PC-3 (cell line): ENCODE measurements at regions of chrX and their contacts with region 1.

Region 1: GRCh38 chrX:55717521-55718497 is at the start of gene RRAGB:
- DNase-seq: peak; percentile 95
- ATAC-seq: peak; percentile 99
- H3K4me3 ChIP-seq: peak within 1 kb of the TSS; percentile 92
- H3K27ac ChIP-seq: peak within 1 kb of the TSS; percentile 72
- H3K4me1 ChIP-seq: peaks cover 8% of the 10 kb centered on the region
- H3K27me3 ChIP-seq: no peaks in the 10 kb centered on the region
- CTCF ChIP-seq: peak; percentile 79
- total RNA-seq, gene RRAGB: 9.5 and 14.3 TPM in 2 replicates

Region 2: DNA sequence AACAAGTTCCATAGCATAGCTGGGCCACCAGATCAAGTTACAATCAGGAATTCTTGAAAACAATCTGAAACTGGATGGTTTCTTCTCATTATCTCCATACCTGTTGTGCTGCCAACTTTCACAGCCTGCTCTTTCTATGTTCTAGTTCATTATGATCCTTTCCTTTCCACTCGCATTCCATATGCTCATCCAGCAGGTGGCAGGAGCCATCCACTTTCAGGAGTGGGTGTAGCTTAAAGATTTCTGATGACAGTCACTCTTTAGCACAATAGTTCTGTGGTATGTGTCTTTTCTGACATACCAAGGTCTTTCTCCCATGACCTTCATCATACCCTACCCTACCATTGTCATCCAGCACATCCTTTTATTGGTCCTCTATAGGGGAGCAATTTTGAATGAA is 582.6 kb before region 1 on chrX:
- CTCF ChIA-PET with region 1: interaction called, 3 read pairs
- POLR2A ChIA-PET with region 1: no interaction called
- intact Hi-C with region 1: loop called (anchors 1 kb)
- DNase-seq: peak; percentile 55
- ATAC-seq: peak; percentile 67
- H3K4me3 ChIP-seq: no peak overlapping the region
- H3K27ac ChIP-seq: no peak overlapping the region
- H3K4me1 ChIP-seq: no peaks in the 10 kb centered on the region
- H3K27me3 ChIP-seq: no peaks in the 10 kb centered on the region; the same call in 1 of the 2 replicates
- CTCF ChIP-seq: peak; percentile 73

Region 3: GRCh38 chrX:55488006-55488592 is 229.7 kb before region 1 on chrX:
- CTCF ChIA-PET with region 1: no interaction called
- POLR2A ChIA-PET with region 1: no interaction called
- intact Hi-C with region 1: no loop called
- DNase-seq: no peak
- ATAC-seq: no peak
- H3K4me3 ChIP-seq: peak overlapping the region; percentile 93
- H3K27ac ChIP-seq: no peak overlapping the region
- H3K4me1 ChIP-seq: peaks cover 5% of the 10 kb centered on the region; the same call in 1 of the 2 replicates
- H3K27me3 ChIP-seq: no peaks in the 10 kb centered on the region
- CTCF ChIP-seq: no peak

Region 4: GRCh38 chrX:55767100-55767499 is 49.3 kb after region 1 on chrX:
- CTCF ChIA-PET with region 1: no interaction called
- POLR2A ChIA-PET with region 1: no interaction called
- intact Hi-C with region 1: loop called (anchors 10 kb)
- DNase-seq: peak; percentile 59
- ATAC-seq: peak; percentile 93
- H3K4me3 ChIP-seq: no peak overlapping the region
- H3K27ac ChIP-seq: no peak overlapping the region
- H3K4me1 ChIP-seq: peaks cover 13% of the 10 kb centered on the region
- H3K27me3 ChIP-seq: no peaks in the 10 kb centered on the region
- CTCF ChIP-seq: no peak

Region 5: DNA sequence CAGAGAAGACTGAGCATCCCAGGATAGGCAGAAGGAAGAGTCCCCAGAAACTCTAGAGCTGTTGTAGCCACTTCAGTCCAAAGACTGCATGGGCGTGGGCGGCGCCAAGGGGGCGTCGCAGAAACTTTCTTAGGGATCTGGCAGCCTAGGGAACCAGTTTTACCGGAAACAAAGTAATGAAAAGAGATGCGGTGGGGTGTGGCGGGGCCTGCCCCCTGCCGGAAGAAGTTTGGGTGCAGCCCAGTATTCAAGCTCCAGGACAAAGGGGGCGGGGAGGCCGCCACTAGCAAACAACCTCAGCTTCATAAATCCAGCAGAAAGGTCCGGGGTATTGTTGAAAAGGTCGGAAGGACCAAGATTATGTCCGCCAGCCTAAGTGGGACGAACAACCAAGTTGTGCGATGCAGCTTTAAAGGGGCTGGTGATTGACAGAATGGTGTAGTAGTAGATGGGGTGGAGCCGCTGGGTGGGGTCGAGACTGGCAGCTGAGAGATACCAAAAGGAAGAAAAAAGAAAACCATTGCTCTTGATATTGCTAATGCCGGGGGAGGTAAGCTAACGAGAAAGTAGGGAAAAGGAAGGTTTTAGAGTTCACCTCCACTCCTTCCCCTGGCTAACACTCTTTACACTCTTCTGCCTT is 190.3 kb after region 1 on chrX:
- CTCF ChIA-PET with region 1: no interaction called
- POLR2A ChIA-PET with region 1: no interaction called
- intact Hi-C with region 1: loop called (anchors 1 kb)
- DNase-seq: peak; percentile 77
- ATAC-seq: peak; percentile 66
- H3K4me3 ChIP-seq: peak overlapping the region; percentile 86
- H3K27ac ChIP-seq: peak overlapping the region; percentile 27
- H3K4me1 ChIP-seq: peaks cover 7% of the 10 kb centered on the region
- H3K27me3 ChIP-seq: no peaks in the 10 kb centered on the region
- CTCF ChIP-seq: peak; percentile 60